Dendritic cell treated with granulocyte-macrophage colony-stimulating factor and Interleukin-4, amounts not matched to agents 40 ng/mL and 50 ng/mL, for 4 days (primary cell): ENCODE measurements at regions of chr2 and their contacts with region 1.

Region 1: DNA sequence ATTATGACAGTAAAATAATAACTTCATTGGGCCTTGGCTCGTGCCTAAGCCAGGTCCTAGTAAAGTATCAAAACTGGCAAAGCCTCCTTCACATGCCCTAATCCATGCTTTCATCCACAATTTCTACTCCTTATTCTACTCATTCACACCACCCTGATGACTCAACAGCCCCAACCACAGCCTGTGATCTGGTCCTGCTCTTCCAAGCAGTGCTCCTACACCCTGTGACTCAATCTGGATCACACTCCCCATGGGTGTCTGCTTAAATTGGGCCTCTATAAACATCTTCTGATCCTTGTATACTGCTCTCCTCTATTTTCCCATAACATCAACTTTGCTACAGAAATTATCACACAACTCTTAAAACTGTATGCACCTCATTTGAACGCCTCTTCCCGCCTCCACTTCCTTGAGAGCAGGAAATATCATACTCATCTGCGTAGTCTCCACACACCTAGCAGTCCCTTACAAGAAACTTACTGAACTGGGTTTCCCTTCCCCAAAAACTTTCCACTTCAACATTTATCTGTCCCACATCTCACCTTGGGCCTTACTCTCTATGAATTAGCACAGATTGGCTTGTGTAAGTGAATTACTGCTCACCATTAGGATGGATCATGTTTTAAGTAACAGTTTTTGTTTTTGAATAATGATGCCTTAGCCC is 15.9 kb downstream of the GTF3C3 start:
- H3K4me3 Mint-ChIP-seq: no peak overlapping the region
- H3K27ac Mint-ChIP-seq: no peak overlapping the region
- H3K4me1 Mint-ChIP-seq: no peaks in the 10 kb centered on the region
- H3K27me3 Mint-ChIP-seq: no peaks in the 10 kb centered on the region

Region 2: DNA sequence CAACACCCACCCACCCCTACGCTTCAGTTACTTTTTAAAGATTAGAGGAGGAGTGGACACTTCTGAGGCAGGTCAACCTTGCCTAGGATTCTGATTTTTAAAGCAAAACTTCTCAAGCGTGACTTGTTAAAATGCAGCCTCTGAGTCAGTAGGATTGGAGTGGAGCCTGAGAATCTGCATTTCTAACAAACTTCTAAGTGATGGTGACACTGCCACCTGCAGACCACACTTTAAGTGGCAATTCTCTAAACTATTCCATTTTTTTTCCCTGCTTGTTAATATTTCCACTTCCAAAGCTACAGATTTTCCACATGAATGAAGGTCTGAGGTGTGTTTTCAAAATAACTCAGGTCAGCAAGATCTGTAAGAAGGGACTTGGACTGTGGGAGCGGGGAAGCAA is 315.2 kb before region 1 on chr2:
- intact Hi-C with region 1: no loop called
- H3K4me3 Mint-ChIP-seq: no peak overlapping the region
- H3K27ac Mint-ChIP-seq: no peak overlapping the region
- H3K4me1 Mint-ChIP-seq: no peaks in the 10 kb centered on the region
- H3K27me3 Mint-ChIP-seq: no peaks in the 10 kb centered on the region

Region 3: GRCh38 chr2:196987649-196988364 is 204.2 kb after region 1 on chr2:
- intact Hi-C with region 1: loop called (anchors 5 kb)
- H3K4me3 Mint-ChIP-seq: peak overlapping the region; percentile 48
- H3K27ac Mint-ChIP-seq: peak overlapping the region; percentile 84
- H3K4me1 Mint-ChIP-seq: peaks cover 41% of the 10 kb centered on the region
- H3K27me3 Mint-ChIP-seq: no peaks in the 10 kb centered on the region

Region 4: DNA sequence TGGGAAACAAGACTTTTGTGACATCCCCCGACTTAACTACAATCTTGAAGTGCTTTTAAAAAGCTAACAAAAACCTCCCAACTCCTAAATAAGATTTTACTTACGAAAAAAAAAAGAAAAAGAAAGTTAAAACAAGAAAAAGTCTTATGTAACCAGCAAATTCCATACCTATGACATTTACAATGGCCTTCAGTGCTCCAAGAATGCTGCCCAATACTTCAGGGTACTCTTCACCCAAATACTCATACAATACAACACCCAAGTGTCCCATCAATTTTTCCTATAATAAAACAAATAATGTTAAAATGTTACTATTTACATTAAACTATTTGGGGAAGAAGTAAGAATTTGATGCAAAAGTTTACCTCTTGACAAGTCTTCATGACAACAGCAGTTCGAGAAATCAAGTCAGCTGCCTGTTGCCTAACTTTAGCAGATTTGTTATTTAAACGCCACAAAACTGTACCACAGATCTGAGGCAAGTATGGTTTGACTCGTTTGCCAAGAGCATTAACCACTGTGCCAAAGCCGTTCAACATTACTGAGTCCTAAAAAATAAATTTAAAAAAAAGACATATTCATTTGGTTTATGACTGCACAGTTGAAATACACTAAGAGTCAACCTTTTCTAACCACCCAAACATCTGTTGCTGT is 616.5 kb after region 1 on chr2:
- intact Hi-C with region 1: loop called (anchors 5 kb)
- H3K4me3 Mint-ChIP-seq: no peak overlapping the region
- H3K27ac Mint-ChIP-seq: no peak overlapping the region
- H3K4me1 Mint-ChIP-seq: no peaks in the 10 kb centered on the region
- H3K27me3 Mint-ChIP-seq: no peaks in the 10 kb centered on the region

Region 5: DNA sequence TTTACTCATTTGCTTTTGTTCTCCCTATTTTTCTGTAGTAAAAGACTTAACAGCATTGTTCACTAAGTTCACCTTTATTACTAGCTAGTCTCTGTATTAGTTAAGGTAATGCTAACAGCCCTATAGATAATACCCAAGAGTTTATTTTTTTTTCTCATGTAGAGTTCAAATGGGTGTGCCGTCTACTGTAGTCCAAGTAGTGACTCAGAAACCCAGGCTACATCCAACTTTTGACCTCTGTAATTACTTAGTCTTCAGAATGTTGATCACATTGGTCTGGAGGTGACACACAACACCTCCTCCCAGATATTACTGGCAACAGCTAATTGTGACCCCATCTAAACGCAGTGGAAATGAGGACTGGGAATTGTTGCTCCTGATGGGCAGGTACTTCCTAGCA is 677.5 kb after region 1 on chr2:
- intact Hi-C with region 1: loop called (anchors 10 kb)
- H3K4me3 Mint-ChIP-seq: no peak overlapping the region
- H3K27ac Mint-ChIP-seq: no peak overlapping the region
- H3K4me1 Mint-ChIP-seq: peaks cover 20% of the 10 kb centered on the region
- H3K27me3 Mint-ChIP-seq: no peaks in the 10 kb centered on the region

Region 6: DNA sequence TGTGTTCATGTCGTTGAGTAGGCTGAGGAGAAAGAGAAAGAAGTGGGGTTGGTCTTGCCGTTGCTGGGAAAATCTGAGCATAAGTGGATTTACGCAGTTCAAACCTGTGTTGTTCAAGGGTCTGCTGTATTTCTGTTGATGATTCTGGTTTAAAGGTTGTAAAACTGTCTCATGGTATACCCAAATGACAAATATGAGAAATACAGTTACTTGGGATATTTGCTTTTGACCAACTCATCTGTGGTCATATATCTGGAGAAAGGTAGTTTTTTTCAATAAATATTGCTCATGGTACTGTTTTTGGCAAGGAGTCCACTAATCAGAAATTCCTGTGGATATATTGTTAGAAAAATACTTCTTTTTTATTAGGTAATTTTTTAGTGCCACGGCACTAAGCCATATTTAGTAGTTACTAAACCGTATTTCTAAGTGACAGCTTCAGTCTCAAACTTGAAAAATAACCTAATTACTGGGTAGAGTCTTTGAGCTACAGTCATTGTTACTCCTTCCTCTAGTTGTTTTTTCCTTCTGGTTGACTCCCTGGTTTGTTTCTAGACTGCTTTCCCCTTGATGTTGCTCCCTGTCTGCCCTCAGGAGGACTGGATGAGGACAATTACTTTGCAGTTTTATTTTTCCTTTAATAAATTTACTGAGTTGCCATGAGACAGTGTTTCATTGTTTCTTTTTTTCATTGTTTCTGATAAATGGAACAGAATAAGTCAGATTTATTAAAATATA is 763.8 kb after region 1 on chr2:
- intact Hi-C with region 1: loop called (anchors 10 kb)
- H3K4me3 Mint-ChIP-seq: no peak overlapping the region
- H3K27ac Mint-ChIP-seq: no peak overlapping the region
- H3K4me1 Mint-ChIP-seq: no peaks in the 10 kb centered on the region
- H3K27me3 Mint-ChIP-seq: no peaks in the 10 kb centered on the region